Dorsolateral prefrontal cortex (tissue), 120 donors: ENCODE measurements at regions of chr20 and their contacts with region 1.

Region 1: GRCh38 chr20:36070451-36070850 is 84.1 kb upstream of the EPB41L1 start:
- DNase-seq: peak in 6 of 10 donors; percentile 44 to 59 (median 50)
- H3K4me3 ChIP-seq: peak overlapping the region in 1 of 59 donors; percentile 12
- H3K27ac ChIP-seq: peak overlapping the region in 37 of 59 donors; percentile 5 to 73 (median 53)
- H3K27me3 ChIP-seq: no peaks in the 10 kb centered on the region
- CTCF ChIP-seq: no peak

Region 2: DNA sequence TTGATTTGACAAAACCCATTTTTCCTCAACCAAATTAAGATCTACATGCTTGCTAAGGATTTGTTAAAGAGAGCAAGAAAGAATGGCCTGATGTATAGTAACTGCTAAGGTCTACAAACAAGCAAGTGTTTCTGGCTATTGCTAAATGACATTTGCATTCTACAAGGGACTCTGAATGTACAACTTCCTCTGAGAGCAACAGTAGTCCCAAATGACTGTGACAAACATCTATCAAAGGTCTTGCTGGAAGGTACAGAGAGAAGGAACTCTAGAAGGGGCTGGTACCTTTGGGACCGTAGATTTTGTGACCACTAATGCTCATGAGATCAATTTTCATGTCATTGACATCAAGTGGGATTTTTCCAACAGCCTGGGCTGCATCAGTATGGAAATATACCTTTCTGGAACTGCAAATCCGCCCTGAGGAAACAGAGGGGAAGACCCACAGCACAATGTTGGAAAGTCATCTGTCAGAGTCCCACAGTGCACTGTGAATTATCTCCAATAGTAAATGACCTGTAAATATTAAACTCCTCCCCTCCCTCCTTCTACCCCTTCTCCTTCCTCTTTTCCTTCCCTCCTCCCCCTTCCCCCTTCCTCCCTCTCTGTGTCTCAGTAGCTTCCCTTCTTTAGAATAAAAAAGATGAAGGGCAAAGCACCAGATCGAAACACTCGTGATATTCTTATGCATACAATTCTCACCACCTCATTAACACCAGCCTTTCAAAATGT is 389.8 kb before region 1 on chr20:
- intact Hi-C with region 1: loop called in 1 of 2 experiments (anchors 5 kb)
- DNase-seq: no peak
- H3K4me3 ChIP-seq: no peak overlapping the region
- H3K27ac ChIP-seq: no peak overlapping the region
- H3K27me3 ChIP-seq: no peaks in the 10 kb centered on the region
- CTCF ChIP-seq: no peak

Region 3: GRCh38 chr20:36128463-36129159 is 58.2 kb after region 1 on chr20:
- intact Hi-C with region 1: loop called in 1 of 2 experiments (anchors 5 kb)
- DNase-seq: no peak
- H3K4me3 ChIP-seq: no peak overlapping the region
- H3K27ac ChIP-seq: peak overlapping the region in 1 of 59 donors; percentile 4
- H3K27me3 ChIP-seq: no peaks in the 10 kb centered on the region
- CTCF ChIP-seq: no peak

Region 4: GRCh38 chr20:36167826-36168531 is 97.5 kb after region 1 on chr20:
- intact Hi-C with region 1: no loop called
- DNase-seq: no peak
- H3K4me3 ChIP-seq: no peak overlapping the region
- H3K27ac ChIP-seq: peak overlapping the region in 4 of 59 donors; percentile 29 to 37 (median 31)
- H3K27me3 ChIP-seq: no peaks in the 10 kb centered on the region
- CTCF ChIP-seq: no peak